Psoas muscle (tissue), 8 donors: ENCODE measurements at regions of chr15 and their contacts with region 1.

Region 1: DNA sequence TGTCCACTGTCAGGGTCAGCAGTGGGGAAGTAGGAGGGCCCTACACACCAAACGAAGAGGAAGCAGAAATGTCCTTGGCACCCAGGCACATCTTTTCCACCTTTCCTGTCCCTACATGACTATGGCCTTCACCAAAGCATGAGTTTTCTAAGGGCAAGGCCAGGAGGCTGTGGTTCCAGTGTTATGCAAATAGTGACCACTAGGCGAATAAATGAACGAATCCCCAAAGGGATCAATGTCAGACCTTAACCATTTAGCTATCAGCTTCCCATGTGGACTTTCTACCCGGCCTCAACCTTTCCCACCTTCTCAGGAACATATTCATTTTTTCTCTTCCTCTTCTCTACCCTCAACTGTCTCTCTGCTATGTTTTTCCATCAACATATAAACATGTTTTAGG is 63.1 kb downstream of the NTRK3 start:
- DNase-seq: no peak
- ATAC-seq: no peak
- H3K4me3 ChIP-seq: no peak overlapping the region
- H3K27ac ChIP-seq: no peak overlapping the region
- H3K4me1 ChIP-seq: no peaks in the 10 kb centered on the region
- H3K27me3 ChIP-seq: peaks cover 0 to 3% (median 2%) of the 10 kb centered on the region in 3 donors
- CTCF ChIP-seq: no peak

Region 2: GRCh38 chr15:87981969-87982368 is 211.4 kb before region 1 on chr15:
- intact Hi-C with region 1: loop called in 1 of 2 experiments (anchors 10 kb)
- DNase-seq: no peak
- ATAC-seq: no peak
- H3K4me3 ChIP-seq: no peak overlapping the region
- H3K27ac ChIP-seq: no peak overlapping the region
- H3K4me1 ChIP-seq: no peaks in the 10 kb centered on the region
- H3K27me3 ChIP-seq: no peaks in the 10 kb centered on the region
- CTCF ChIP-seq: no peak

Region 3: DNA sequence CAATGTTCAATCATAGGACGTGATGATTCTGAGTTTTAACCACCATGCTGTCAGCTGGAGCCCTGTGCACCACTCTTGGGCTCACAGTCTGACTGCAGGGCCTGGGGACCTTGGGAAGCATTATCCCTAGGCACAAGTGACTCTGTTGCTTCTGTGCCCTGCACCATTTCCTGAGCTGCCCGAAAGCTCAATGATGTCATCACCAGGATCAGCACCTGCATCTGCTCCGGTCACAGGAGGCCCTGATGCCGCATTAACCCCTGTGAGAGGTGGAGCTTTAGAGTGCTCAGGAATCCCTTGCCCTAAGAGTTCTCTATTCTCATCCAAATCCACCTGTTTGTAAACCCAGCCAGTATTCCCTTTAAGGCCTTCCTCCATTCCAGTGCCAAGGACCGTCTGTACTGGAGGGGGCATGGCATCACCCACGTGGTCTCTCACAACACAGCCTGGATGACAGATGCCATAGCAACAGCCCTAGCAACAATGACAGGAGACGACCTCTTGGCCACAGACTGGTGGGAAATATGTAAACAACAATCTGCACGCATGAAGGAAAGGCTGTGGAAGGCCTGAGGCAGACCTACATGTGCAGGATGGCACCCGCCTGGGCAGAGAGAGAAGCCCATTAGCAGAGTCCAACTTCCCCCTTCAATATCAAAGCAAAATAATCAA is 25.3 kb after region 1 on chr15:
- intact Hi-C with region 1: no loop called
- DNase-seq: no peak
- ATAC-seq: no peak
- H3K4me3 ChIP-seq: no peak overlapping the region
- H3K27ac ChIP-seq: no peak overlapping the region
- H3K4me1 ChIP-seq: no peaks in the 10 kb centered on the region
- H3K27me3 ChIP-seq: peaks cover 0 to 11% (median 2%) of the 10 kb centered on the region in 3 donors
- CTCF ChIP-seq: no peak

Region 4: DNA sequence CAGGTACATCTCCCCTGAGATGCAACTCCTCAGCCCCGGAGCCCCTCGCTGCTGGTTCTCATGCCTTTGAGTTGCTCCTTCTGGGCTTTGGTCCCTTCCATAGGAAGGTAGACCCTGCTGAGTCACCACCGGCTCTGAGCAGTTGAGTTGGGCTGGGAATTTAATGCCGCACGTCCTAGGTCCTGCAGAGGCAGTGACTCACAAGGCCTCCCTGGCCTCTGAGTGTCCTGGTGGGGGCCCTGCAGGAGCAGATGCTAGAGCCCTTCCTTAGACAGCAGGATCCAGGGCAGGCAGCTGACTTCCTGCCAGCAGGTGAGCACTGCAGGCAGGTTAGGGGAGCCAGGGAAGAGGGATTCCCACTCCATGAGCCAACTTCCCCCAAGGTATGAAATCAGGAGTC is 68.6 kb after region 1 on chr15:
- intact Hi-C with region 1: no loop called
- DNase-seq: no peak
- ATAC-seq: no peak
- H3K4me3 ChIP-seq: no peak overlapping the region
- H3K27ac ChIP-seq: no peak overlapping the region
- H3K4me1 ChIP-seq: peaks cover 3% of the 10 kb centered on the region
- H3K27me3 ChIP-seq: peaks cover 0 to 23% (median 8%) of the 10 kb centered on the region in 3 donors
- CTCF ChIP-seq: no peak